ENCODE measurements at regions of chr2 and their contacts with region 1.

Region 1: GRCh38 chr2:148526509-148527346 is 117.8 kb upstream of the EPC2 start:
- DNase-seq: no peak
- H3K4me3 ChIP-seq: no peak overlapping the region
- H3K27ac ChIP-seq: no peak overlapping the region
- H3K4me1 ChIP-seq: no peaks in the 10 kb centered on the region
- H3K27me3 ChIP-seq: no peaks in the 10 kb centered on the region
- CTCF ChIP-seq: no peak

Region 2: GRCh38 chr2:148578493-148578884 is 51.8 kb after region 1 on chr2:
- CTCF ChIA-PET with region 1: no interaction called
- POLR2A ChIA-PET with region 1: interaction called, 21 read pairs
- intact Hi-C with region 1: no loop called
- DNase-seq: no peak
- H3K4me3 ChIP-seq: no peak overlapping the region
- H3K27ac ChIP-seq: no peak overlapping the region
- H3K4me1 ChIP-seq: no peaks in the 10 kb centered on the region
- H3K27me3 ChIP-seq: peaks cover 38% of the 10 kb centered on the region
- CTCF ChIP-seq: no peak

Measured in A673 (cell line).